ENCODE measurements at regions of chr3 and their contacts with region 1.

Region 1: DNA sequence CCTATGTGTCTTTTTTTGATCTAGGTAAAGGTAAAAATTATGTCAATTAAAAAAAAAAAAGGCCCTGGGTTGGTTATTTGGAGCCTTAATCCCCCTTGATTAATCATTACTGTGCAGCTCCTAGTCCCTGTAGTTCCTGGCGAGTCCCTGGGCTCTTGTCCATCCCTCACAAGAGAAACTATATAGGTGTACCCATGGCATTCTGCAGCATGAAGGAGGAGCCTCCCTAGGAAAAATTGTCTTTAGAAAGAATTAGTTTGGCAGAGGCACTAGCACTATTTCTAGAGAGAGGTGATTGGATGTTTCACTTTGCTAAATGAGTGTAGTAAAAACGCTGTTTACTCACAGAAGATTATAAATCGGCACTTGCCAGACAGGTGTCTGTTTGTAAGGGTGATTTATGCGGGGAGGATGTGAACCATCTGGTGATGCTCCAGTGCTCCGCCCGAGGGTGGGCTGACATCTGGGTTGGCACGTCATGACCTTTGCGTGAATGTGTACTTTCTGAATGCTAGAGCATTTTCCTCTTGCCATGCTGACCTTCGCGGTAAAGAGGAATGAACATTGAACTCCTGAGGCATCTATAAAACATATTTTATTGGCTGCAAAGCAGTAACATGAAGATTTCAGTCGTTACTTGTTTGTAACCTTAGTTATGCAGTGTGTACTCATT is 12.6 kb downstream of the PLCL2 start:
- DNase-seq: no peak
- ATAC-seq: peak; percentile 54 to 57
- H3K4me3 ChIP-seq: peak overlapping the region; percentile 18 to 42 (median 31)
- H3K27ac ChIP-seq: peak overlapping the region; percentile 72 to 84 (median 78)
- H3K4me1 ChIP-seq: peaks cover 72 to 88% of the 10 kb centered on the region in 2 donors
- H3K27me3 ChIP-seq: no peaks in the 10 kb centered on the region
- CTCF ChIP-seq: no peak
- POLR2A ChIP-seq: no peak

Region 2: GRCh38 chr3:16264708-16265454 is 632.5 kb before region 1 on chr3 and contains the starts of genes DPH3 and OXNAD1:
- in situ Hi-C with region 1: no loop called
- intact Hi-C with region 1: loop called (anchors 10 kb)
- DNase-seq: peak; percentile 100
- ATAC-seq: peak; percentile 93 to 95
- H3K4me3 ChIP-seq: peak within 1 kb of the TSS; percentile 65 to 91 (median 81)
- H3K27ac ChIP-seq: peak within 1 kb of the TSS; percentile 89 to 98 (median 92)
- H3K4me1 ChIP-seq: peaks cover 40 to 43% of the 10 kb centered on the region in 2 donors
- H3K27me3 ChIP-seq: no peaks in the 10 kb centered on the region
- CTCF ChIP-seq: peak; percentile 22 to 36 (median 32)
- POLR2A ChIP-seq: peak; percentile 80 to 90
- total RNA-seq, gene DPH3: 40.3 to 66.6 (median 44.2) TPM
- total RNA-seq, gene OXNAD1: 12.3 to 28.6 (median 17.1) TPM